ENCODE measurements at regions of chr9 and their contacts with region 1.

Region 1: DNA sequence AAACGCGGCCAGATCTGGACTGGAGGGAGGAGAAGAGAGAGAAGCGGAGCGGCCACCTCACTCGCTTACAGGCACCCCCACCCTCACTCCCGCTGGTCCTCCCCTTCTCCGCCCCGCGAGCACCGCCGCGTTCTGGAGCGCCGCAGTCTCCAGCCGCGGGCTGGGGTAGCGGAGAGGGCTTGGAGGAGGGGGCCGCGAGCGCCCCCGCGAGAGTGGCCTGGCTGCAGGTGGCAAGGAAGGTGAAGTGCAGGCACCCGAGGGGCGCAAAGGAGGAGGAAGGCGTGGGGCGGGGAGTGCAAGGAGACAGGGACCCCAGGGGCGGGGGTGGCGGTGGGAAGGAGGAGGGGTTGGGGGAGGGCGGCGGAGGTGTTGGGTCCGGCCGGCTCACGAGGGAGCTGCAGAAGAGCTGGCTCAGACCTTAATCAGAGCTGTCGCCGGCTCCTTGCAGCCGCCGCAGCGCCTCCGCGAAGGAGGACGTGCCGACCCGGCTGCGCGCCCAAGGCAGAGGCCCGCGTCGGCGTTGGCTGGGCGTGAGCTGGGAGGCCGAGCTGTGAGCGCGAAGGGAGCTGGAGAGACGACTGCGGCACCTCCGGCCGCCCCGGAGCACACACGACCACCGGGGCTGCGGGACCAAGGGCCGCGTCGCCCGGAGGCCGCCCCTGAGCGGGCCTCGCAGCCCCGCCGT is at the start of gene DMRT3:
- DNase-seq: peak; percentile 56
- CTCF ChIP-seq: no peak

Region 2: GRCh38 chr9:1042466-1042865 is 66.1 kb after region 1 on chr9:
- in situ Hi-C with region 1: loop called (anchors 10 kb)
- DNase-seq: peak; percentile 67
- CTCF ChIP-seq: peak; percentile 43